Right cardiac atrium (tissue), 5 donors: ENCODE measurements at regions of chr4 and their contacts with region 1.

Region 1: DNA sequence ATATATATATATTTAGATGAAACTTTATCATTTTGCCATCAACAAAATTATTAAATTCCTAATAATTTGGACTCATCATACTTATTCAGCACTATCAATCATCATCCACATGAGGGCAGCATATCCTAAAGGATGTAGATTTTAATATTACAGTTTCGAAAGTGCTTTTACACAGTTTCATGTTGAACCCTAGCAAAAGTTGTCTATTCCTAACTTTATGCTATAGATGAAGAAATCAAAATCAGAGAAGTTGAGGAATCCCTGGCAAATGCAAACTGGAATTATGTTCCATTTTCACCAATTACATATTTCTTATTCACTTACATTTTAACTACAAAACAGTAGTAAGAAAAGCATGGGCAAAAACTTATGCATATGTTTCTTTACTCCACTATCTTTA is 36.6 kb upstream of the UGT2A1 start:
- DNase-seq: no peak
- ATAC-seq: no peak
- H3K4me3 ChIP-seq: no peak overlapping the region
- H3K27ac ChIP-seq: no peak overlapping the region
- H3K4me1 ChIP-seq: no peaks in the 10 kb centered on the region
- H3K27me3 ChIP-seq: no peaks in the 10 kb centered on the region

Region 2: DNA sequence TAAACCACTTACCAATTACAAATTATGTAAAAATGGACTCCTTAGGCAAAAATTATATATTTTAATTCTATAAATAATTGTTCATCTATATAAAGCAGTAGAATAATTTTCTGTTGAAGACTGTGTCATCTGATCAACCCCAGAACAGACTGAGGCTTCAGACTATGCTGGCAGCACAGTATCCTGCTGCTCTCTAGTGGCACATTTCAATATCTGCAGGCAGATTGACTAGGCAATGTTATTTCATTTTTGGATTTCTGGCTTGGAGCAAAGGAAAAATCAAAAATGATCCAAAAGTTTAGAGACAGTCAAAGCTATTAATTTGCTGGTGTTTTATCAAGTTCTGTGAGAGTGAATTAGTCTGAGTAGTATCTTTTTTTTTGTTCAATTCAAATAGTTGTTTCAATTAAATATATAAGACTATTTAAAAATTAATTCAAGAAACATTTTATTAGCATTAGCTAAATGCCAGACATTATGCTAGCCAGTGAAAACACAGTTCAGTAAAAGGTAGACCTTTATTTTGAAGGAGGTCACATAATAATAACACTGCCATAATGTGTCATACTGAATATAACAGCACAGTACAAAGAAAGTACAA is 191.7 kb after region 1 on chr4:
- intact Hi-C with region 1: loop called in 1 of 4 experiments (anchors 10 kb)
- DNase-seq: peak in 2 of 3 donors; percentile 10 to 12
- ATAC-seq: peak; percentile 67 to 75
- H3K4me3 ChIP-seq: no peak overlapping the region
- H3K27ac ChIP-seq: no peak overlapping the region
- H3K4me1 ChIP-seq: no peaks in the 10 kb centered on the region
- H3K27me3 ChIP-seq: no peaks in the 10 kb centered on the region

Region 3: GRCh38 chr4:70280567-70280966 is 591.0 kb after region 1 on chr4:
- intact Hi-C with region 1: no loop called
- DNase-seq: no peak
- ATAC-seq: no peak
- H3K4me3 ChIP-seq: no peak overlapping the region
- H3K27ac ChIP-seq: no peak overlapping the region
- H3K4me1 ChIP-seq: no peaks in the 10 kb centered on the region
- H3K27me3 ChIP-seq: no peaks in the 10 kb centered on the region